ENCODE measurements at regions of chr9 and their contacts with region 1.

Region 1: GRCh38 chr9:19689328-19690101 is 99.3 kb downstream of the SLC24A2 start:
- DNase-seq: no peak
- H3K4me3 ChIP-seq: no peak overlapping the region
- H3K27ac ChIP-seq: peak overlapping the region in 54 of 59 donors; percentile 6 to 99 (median 75)
- H3K27me3 ChIP-seq: no peaks in the 10 kb centered on the region
- CTCF ChIP-seq: no peak

Region 2: DNA sequence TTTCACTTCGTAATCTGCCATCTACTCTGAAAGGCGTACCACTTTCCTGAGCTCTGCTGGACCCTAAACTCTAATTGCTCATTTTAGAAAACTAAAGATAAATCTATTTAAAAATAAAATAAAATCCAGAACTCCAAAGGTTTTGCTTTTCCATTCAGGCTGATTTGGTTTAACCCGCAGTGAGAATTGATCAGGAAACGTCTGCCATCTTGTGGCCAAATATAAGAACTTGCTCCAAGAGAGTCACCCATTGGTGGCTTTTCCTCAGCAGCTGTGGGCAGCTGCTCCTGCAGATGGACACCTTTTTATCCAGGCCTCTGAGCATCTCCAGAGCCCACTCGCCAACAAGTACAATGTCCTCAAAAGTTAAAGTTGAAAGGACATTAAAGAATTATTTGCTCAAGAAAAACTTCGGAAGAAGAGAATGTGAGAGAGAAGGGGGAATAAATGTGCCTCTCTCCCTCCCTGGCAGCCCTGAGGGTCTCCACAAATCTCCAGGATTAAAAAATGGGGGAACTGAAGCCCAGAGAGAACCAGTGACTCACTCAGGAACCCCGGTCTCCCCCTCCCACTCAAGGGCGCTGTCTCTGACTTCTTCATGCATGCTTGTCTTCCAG is 660.6 kb before region 1 on chr9:
- intact Hi-C with region 1: no loop called
- DNase-seq: peak in 2 of 10 donors; percentile 31 to 39
- H3K4me3 ChIP-seq: peak overlapping the region in 5 of 59 donors; percentile 4 to 52 (median 15)
- H3K27ac ChIP-seq: no peak overlapping the region
- H3K27me3 ChIP-seq: peaks cover 0 to 9% (median 0%) of the 10 kb centered on the region in 45 donors
- CTCF ChIP-seq: peak; percentile 71 to 93 (median 85)

Region 3: DNA sequence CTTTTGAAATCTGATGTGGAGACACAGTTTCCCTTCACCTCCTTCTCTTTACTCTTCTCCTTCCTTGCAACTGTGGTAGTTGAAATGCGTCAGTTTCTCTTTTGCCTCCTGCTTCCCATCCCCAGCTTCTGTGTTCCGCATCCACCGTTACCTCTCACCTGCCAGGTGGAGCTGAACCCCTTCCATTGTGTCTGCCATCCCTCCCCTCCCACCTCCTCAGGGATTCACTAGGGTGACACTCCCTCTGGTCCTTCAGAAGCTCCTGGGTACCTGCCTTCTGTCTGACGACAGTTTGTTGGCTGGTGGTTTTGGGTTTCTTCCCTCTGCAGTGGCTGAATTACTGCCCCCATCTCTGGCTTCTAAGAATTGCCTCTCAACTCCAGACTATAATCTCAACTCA is 32.8 kb before region 1 on chr9:
- intact Hi-C with region 1: loop called in 1 of 2 experiments (anchors 5 kb)
- DNase-seq: no peak
- H3K4me3 ChIP-seq: no peak overlapping the region
- H3K27ac ChIP-seq: peak overlapping the region in 48 of 59 donors; percentile 5 to 92 (median 56)
- H3K27me3 ChIP-seq: no peaks in the 10 kb centered on the region
- CTCF ChIP-seq: no peak